ENCODE measurements at regions of chr1 and their contacts with region 1.

Region 1: GRCh38 chr1:87869567-87869966 is 540.9 kb downstream of the LMO4 start:
- H3K4me3 Mint-ChIP-seq: no peak overlapping the region
- H3K27ac Mint-ChIP-seq: peak overlapping the region; percentile 80
- H3K4me1 Mint-ChIP-seq: peaks cover 33% of the 10 kb centered on the region
- H3K27me3 Mint-ChIP-seq: no peaks in the 10 kb centered on the region

Region 2: GRCh38 chr1:87706203-87706602 is 163.4 kb before region 1 on chr1:
- intact Hi-C with region 1: no loop called
- H3K4me3 Mint-ChIP-seq: no peak overlapping the region
- H3K27ac Mint-ChIP-seq: no peak overlapping the region
- H3K4me1 Mint-ChIP-seq: no peaks in the 10 kb centered on the region
- H3K27me3 Mint-ChIP-seq: no peaks in the 10 kb centered on the region

Region 3: GRCh38 chr1:87833166-87833565 is 36.4 kb before region 1 on chr1:
- intact Hi-C with region 1: loop called (anchors 5 kb)
- H3K4me3 Mint-ChIP-seq: no peak overlapping the region
- H3K27ac Mint-ChIP-seq: peak overlapping the region; percentile 18
- H3K4me1 Mint-ChIP-seq: peaks cover 54% of the 10 kb centered on the region
- H3K27me3 Mint-ChIP-seq: no peaks in the 10 kb centered on the region

Region 4: DNA sequence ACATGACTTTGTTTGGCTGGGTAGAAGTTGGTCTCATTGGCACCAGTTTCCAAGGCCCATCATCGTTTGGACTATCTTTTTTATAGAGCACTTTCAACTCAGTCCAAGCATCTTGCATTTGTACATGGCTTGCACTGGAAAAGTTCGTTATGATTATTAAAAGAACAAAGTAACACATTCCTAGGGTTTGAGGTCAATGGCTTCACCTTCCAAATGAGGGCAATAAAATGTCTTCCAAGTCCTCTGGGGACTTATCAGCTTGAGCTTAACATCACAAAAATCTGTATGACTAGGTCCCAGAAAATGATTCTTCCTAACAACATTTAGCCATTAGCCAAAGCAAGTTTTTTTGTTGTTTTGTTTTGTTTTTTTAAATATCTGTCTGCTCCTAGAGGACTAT is 69.9 kb after region 1 on chr1:
- intact Hi-C with region 1: loop called (anchors 10 kb)
- H3K4me3 Mint-ChIP-seq: no peak overlapping the region
- H3K27ac Mint-ChIP-seq: no peak overlapping the region
- H3K4me1 Mint-ChIP-seq: no peaks in the 10 kb centered on the region
- H3K27me3 Mint-ChIP-seq: peaks cover 3% of the 10 kb centered on the region

Measured in dendritic cell treated with granulocyte-macrophage colony-stimulating factor and Interleukin-4, amounts not matched to agents 40 ng/mL and 50 ng/mL, for 4 days (primary cell).